ENCODE measurements at regions of chr10 and their contacts with region 1.

Region 1: DNA sequence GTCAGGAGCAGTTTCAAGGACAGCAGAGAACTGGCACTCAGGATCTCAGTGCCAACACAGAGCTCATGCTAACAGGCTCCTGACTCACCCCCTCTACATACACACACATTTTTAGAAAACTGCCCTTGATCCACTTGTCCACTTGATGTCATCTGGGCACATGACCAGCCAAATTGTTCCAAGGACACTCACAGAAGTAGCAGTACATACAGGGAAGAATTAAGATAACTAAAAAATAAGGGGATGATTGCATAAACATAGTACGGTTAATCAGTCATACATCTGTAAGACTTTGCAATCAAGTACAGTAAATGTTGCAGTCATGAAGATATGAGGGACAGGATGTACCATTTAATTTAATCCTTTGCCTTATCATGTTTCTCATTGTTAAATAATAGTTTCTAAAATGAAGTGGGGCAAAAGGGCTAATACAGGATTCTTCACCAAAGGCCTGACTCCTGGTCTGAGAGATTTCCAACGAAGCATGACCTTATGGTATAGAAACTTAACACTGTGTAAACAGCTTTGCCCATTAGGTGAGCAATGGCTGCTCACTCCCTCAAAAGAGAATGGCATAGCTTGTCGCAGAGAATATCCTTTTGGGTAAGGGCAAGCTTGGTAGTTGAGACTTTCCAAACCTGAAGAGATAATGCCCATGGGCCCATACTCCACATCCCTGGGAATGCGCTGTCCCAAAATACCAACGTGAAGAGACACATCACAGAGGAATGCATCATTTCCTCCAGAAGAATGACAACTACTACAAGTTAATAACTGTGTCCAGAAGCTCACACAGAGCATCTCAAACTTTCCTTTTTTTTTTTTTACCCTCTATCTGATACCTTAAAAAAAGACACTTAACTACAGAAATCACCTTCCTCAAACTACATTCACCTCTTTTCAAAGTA is 94.1 kb downstream of the ARMH3 start:
- DNase-seq: no peak
- ATAC-seq: no peak
- H3K4me3 ChIP-seq: no peak overlapping the region
- H3K4me3 Mint-ChIP-seq: no peak overlapping the region
- H3K27ac ChIP-seq: no peak overlapping the region
- H3K27ac Mint-ChIP-seq: no peak overlapping the region
- H3K4me1 ChIP-seq: no peaks in the 10 kb centered on the region
- H3K4me1 Mint-ChIP-seq: no peaks in the 10 kb centered on the region
- H3K27me3 ChIP-seq: no peaks in the 10 kb centered on the region
- H3K27me3 Mint-ChIP-seq: no peaks in the 10 kb centered on the region
- CTCF ChIP-seq: no peak

Region 2: GRCh38 chr10:101353692-101354327 is 608.0 kb before region 1 on chr10 and contains the start of gene BTRC:
- CTCF ChIA-PET with region 1: no interaction called
- POLR2A ChIA-PET with region 1: no interaction called
- intact Hi-C with region 1: no loop called
- DNase-seq: peak; percentile 87 to 99 (median 92)
- ATAC-seq: peak; percentile 94
- H3K4me3 ChIP-seq: peak within 1 kb of the TSS; percentile 79
- H3K4me3 Mint-ChIP-seq: peak within 1 kb of the TSS; percentile 100
- H3K27ac ChIP-seq: peak within 1 kb of the TSS; percentile 26 to 86
- H3K27ac Mint-ChIP-seq: peak within 1 kb of the TSS; percentile 94
- H3K4me1 ChIP-seq: peaks cover 17% of the 10 kb centered on the region
- H3K4me1 Mint-ChIP-seq: peaks cover 39% of the 10 kb centered on the region
- H3K27me3 ChIP-seq: peaks cover 0 to 5% of the 10 kb centered on the region in 2 experiments
- H3K27me3 Mint-ChIP-seq: peaks cover 17% of the 10 kb centered on the region
- CTCF ChIP-seq: no peak
- total RNA-seq, gene BTRC: 13.1 to 13.2 TPM

Region 3: GRCh38 chr10:101830322-101831168 is 131.3 kb before region 1 on chr10:
- CTCF ChIA-PET with region 1: no interaction called
- POLR2A ChIA-PET with region 1: no interaction called
- intact Hi-C with region 1: no loop called
- DNase-seq: peak; percentile 91 to 99 (median 94)
- ATAC-seq: peak; percentile 79
- H3K4me3 ChIP-seq: peak overlapping the region; percentile 63
- H3K4me3 Mint-ChIP-seq: peak overlapping the region; percentile 94
- H3K27ac ChIP-seq: peak overlapping the region; percentile 76 to 85
- H3K27ac Mint-ChIP-seq: peak overlapping the region; percentile 99
- H3K4me1 ChIP-seq: peaks cover 69% of the 10 kb centered on the region
- H3K4me1 Mint-ChIP-seq: peaks cover 55% of the 10 kb centered on the region
- H3K27me3 ChIP-seq: no peaks in the 10 kb centered on the region
- H3K27me3 Mint-ChIP-seq: peaks cover 5% of the 10 kb centered on the region
- CTCF ChIP-seq: no peak

Region 4: GRCh38 chr10:101901340-101901739 is 60.5 kb before region 1 on chr10:
- CTCF ChIA-PET with region 1: no interaction called
- POLR2A ChIA-PET with region 1: no interaction called
- intact Hi-C with region 1: no loop called
- DNase-seq: no peak
- ATAC-seq: no peak
- H3K4me3 ChIP-seq: no peak overlapping the region
- H3K4me3 Mint-ChIP-seq: no peak overlapping the region
- H3K27ac ChIP-seq: no peak overlapping the region
- H3K27ac Mint-ChIP-seq: no peak overlapping the region
- H3K4me1 ChIP-seq: no peaks in the 10 kb centered on the region
- H3K4me1 Mint-ChIP-seq: peaks cover 12% of the 10 kb centered on the region
- H3K27me3 ChIP-seq: no peaks in the 10 kb centered on the region
- H3K27me3 Mint-ChIP-seq: no peaks in the 10 kb centered on the region
- CTCF ChIP-seq: no peak

Region 5: DNA sequence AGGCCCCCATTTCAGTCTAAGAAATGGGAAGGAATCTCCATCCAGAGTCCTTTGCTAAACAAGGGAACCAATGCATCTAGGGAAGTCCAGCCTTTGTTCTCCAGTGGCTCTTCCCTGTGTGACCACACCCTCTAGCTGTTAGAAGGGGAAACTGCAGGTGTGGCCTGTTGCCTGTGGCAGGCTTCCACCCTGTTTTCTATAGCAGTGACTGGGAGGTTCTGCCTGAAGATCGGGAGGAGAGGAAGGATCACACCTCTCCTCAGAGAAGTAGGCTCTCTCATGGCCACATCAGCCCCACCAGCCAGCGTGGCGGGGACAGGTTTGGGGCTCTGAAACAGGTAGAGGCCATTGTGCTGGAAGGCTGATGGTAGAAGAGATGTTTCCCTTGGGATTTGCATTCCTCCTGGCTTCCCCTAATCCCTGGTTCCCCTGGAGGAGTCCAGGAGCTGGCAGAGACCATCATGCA is 634.7 kb after region 1 on chr10:
- CTCF ChIA-PET with region 1: no interaction called
- POLR2A ChIA-PET with region 1: no interaction called
- intact Hi-C with region 1: loop called in 1 of 2 experiments (anchors 10 kb)
- DNase-seq: peak in 5 of 14 experiments; percentile 11 to 51 (median 39)
- ATAC-seq: peak; percentile 63
- H3K4me3 ChIP-seq: no peak overlapping the region
- H3K4me3 Mint-ChIP-seq: no peak overlapping the region
- H3K27ac ChIP-seq: no peak overlapping the region
- H3K27ac Mint-ChIP-seq: no peak overlapping the region
- H3K4me1 ChIP-seq: no peaks in the 10 kb centered on the region
- H3K4me1 Mint-ChIP-seq: peaks cover 5% of the 10 kb centered on the region
- H3K27me3 ChIP-seq: no peaks in the 10 kb centered on the region
- H3K27me3 Mint-ChIP-seq: no peaks in the 10 kb centered on the region
- CTCF ChIP-seq: peak; percentile 62

Measured in CD4-positive, alpha-beta T cell (primary cell).